Vagina (tissue), 2 donors: ENCODE measurements at regions of chr9 and their contacts with region 1.

Region 1: GRCh38 chr9:122464633-122465567 is 12.8 kb downstream of the OR1J1 start:
- DNase-seq: no peak
- H3K4me3 ChIP-seq: peak overlapping the region; percentile 33 to 37
- H3K27ac ChIP-seq: no peak overlapping the region
- H3K4me1 ChIP-seq: peaks cover 11% of the 10 kb centered on the region
- H3K27me3 ChIP-seq: no peaks in the 10 kb centered on the region
- CTCF ChIP-seq: peak; percentile 59 to 84 (median 76)
- POLR2A ChIP-seq: no peak

Region 2: GRCh38 chr9:122445155-122445749 is 19.6 kb before region 1 on chr9:
- intact Hi-C with region 1: no loop called
- DNase-seq: no peak
- H3K4me3 ChIP-seq: no peak overlapping the region
- H3K27ac ChIP-seq: no peak overlapping the region
- H3K4me1 ChIP-seq: peaks cover 20% of the 10 kb centered on the region
- H3K27me3 ChIP-seq: no peaks in the 10 kb centered on the region
- CTCF ChIP-seq: no peak
- POLR2A ChIP-seq: no peak

Region 3: DNA sequence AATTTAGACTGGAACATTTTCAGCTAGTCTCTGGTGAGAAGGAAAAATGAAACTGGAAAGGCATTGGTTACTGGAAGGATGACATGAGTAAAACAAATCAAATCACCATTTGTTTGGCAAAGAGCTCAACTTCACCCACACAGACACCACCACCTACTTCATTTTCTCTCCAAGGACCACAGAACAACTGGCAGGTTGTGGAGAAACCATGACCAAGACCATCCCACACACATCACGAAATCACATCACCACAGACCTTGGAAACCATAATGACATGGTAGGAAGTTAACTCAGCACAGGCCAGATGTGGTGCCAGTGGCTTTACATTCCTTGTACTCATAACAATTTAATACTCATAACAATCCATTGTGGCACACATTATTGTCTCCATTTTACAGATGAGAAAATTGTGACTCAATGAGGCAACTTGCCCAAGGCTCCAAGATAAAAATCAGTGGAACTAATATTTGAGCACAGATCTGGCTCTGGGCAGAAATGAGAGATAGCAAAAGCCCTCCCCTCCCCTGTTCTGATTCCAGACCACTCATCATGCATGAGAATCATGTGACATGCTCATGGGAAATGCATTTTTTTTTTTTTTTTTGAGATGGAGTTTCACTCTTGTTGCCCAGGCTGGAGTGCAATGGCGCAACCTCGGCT is 342.5 kb after region 1 on chr9:
- intact Hi-C with region 1: loop called (anchors 10 kb)
- DNase-seq: no peak
- H3K4me3 ChIP-seq: no peak overlapping the region
- H3K27ac ChIP-seq: no peak overlapping the region
- H3K4me1 ChIP-seq: no peaks in the 10 kb centered on the region
- H3K27me3 ChIP-seq: no peaks in the 10 kb centered on the region
- CTCF ChIP-seq: no peak
- POLR2A ChIP-seq: no peak